Gastrocnemius medialis (tissue), 4 donors: ENCODE measurements at regions of chr6 and their contacts with region 1.

Region 1: DNA sequence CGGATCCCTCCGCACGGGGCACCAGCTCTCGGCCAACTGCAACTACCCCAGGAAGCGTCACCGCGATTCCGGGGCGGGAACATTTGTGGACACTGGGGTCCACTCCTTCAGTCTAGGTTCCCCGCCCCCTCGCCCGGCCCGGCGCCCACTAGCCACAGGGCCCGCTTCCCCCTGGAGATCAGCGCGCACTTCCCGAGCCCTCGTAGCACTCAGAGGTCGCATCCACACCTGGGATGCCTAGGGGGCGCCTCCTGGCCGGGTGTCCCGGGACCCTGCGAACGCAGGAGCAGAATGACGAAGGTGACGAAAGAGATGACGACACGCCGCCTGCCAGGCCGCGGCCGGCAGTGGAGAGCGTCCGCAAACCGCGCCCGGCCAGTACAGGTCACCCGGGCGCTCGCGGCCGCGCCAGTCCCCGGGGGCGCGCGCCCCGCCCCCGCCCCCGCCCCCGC is 309 bp upstream of the AIG1 start:
- DNase-seq: peak; percentile 65 to 84
- ATAC-seq: peak; percentile 57 to 69
- H3K4me3 ChIP-seq: peak overlapping the region; percentile 81 to 97 (median 89)
- H3K27ac ChIP-seq: peak overlapping the region; percentile 96 to 100 (median 98)
- H3K4me1 ChIP-seq: peaks cover 28 to 36% of the 10 kb centered on the region in 2 donors
- H3K27me3 ChIP-seq: no peaks in the 10 kb centered on the region
- CTCF ChIP-seq: peak in 1 of 5 experiments; percentile 22
- POLR2A ChIP-seq: peak; percentile 65 to 76

Region 2: GRCh38 chr6:141541581-141542324 is 1518.6 kb before region 1 on chr6:
- in situ Hi-C with region 1: no loop called
- intact Hi-C with region 1: no loop called
- DNase-seq: no peak
- ATAC-seq: no peak
- H3K4me3 ChIP-seq: no peak overlapping the region
- H3K27ac ChIP-seq: no peak overlapping the region
- H3K4me1 ChIP-seq: no peaks in the 10 kb centered on the region
- H3K27me3 ChIP-seq: no peaks in the 10 kb centered on the region
- CTCF ChIP-seq: no peak
- POLR2A ChIP-seq: no peak

Region 3: GRCh38 chr6:142531727-142532126 is 528.7 kb before region 1 on chr6:
- in situ Hi-C with region 1: no loop called
- intact Hi-C with region 1: no loop called
- DNase-seq: no peak
- ATAC-seq: no peak
- H3K4me3 ChIP-seq: no peak overlapping the region
- H3K27ac ChIP-seq: no peak overlapping the region
- H3K4me1 ChIP-seq: no peaks in the 10 kb centered on the region
- H3K27me3 ChIP-seq: no peaks in the 10 kb centered on the region
- CTCF ChIP-seq: no peak
- POLR2A ChIP-seq: no peak

Region 4: DNA sequence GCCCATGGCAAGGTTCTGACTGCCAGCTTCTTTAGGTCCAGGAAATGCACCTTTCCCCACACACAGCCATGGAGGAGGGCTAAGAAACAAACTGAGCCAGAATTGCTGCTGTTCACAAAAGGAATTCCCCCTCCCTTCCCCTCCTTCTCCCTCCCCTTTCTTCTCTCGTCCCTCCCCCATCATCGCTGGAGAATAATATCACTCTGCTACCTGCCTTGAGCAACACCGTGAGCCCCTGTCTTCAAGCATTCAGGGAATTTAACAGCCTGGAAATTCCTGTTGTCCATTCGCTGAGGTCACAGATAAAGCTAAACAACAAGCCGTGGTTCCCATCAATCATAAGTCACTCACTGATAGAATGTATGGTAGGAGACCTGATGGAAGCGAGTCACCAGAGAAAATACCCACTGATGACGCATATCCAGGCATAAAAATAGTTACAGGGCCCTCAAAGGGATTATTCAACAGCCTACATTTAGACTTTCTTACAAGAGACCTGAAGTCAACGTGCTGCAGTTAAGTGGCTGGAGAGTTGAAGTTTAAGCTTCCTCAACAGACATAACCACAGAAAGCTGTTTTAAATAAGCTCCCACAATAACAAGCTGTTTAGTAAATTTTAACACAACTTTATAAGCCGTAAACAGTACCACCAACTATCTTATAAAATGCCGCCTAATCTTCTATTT is 175.1 kb before region 1 on chr6:
- in situ Hi-C with region 1: no loop called
- intact Hi-C with region 1: loop called (anchors 2 kb)
- DNase-seq: peak; percentile 48 to 53
- ATAC-seq: peak; percentile 94 to 97
- H3K4me3 ChIP-seq: peak overlapping the region; percentile 38 to 54 (median 47)
- H3K27ac ChIP-seq: peak overlapping the region; percentile 81 to 93 (median 84)
- H3K4me1 ChIP-seq: peaks cover 61 to 71% of the 10 kb centered on the region in 2 donors
- H3K27me3 ChIP-seq: no peaks in the 10 kb centered on the region
- CTCF ChIP-seq: no peak
- POLR2A ChIP-seq: peak; percentile 55 to 80

Region 5: DNA sequence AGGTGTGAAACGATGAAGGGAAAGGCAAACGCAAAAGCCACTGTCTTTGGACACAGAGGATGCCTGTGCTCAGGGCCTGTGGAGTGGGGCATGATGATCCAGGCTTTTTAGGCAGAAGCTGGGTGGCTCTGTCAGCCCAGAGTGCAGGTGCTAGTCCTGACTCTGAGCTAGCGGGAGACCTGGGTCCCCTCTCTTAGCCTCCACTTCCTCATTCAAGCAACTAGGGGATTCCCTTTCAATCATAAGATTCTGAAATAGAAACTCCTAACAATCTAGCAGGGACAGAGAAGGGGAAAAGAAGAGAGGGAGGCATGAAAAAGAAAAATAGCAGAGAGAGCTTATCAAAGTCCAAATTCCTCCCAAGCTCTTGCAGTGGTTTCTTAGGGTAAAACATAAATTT is 107.8 kb before region 1 on chr6:
- in situ Hi-C with region 1: loop called in 2 of 4 experiments (anchors 5 to 10 kb)
- intact Hi-C with region 1: no loop called
- DNase-seq: no peak
- ATAC-seq: no peak
- H3K4me3 ChIP-seq: no peak overlapping the region
- H3K27ac ChIP-seq: no peak overlapping the region
- H3K4me1 ChIP-seq: peaks cover 4 to 5% of the 10 kb centered on the region in 2 donors
- H3K27me3 ChIP-seq: no peaks in the 10 kb centered on the region
- CTCF ChIP-seq: no peak
- POLR2A ChIP-seq: no peak

Region 6: DNA sequence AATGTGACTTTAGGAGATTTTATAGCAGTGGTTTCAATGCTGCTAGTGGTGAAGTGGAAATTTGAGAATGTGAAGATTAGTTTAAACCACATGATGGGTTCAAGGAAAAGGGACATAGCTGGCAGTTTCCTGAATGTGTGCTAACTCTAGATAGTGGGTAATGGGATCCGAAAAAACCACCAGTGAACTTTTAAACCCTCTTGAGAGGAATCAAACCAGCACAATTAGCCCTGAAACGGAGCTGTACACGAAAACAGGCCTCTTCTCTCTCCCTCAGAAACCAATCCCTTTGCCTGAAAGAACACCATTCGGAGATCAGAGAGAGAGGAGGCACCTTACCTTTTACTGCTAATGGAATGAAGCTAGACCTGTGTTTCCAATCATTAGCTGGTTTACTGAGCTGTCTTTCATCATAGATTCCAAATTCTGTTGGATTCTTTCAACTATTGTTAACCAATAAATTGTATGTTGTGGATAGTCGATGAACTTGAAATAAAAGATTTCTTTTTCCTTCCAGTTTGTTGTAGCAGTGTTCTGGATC is 104.3 kb after region 1 on chr6:
- in situ Hi-C with region 1: no loop called
- intact Hi-C with region 1: loop called (anchors 10 kb)
- DNase-seq: no peak
- ATAC-seq: no peak
- H3K4me3 ChIP-seq: no peak overlapping the region
- H3K27ac ChIP-seq: no peak overlapping the region
- H3K4me1 ChIP-seq: peaks cover 13 to 15% of the 10 kb centered on the region in 2 donors
- H3K27me3 ChIP-seq: no peaks in the 10 kb centered on the region
- CTCF ChIP-seq: no peak
- POLR2A ChIP-seq: no peak

Region 7: DNA sequence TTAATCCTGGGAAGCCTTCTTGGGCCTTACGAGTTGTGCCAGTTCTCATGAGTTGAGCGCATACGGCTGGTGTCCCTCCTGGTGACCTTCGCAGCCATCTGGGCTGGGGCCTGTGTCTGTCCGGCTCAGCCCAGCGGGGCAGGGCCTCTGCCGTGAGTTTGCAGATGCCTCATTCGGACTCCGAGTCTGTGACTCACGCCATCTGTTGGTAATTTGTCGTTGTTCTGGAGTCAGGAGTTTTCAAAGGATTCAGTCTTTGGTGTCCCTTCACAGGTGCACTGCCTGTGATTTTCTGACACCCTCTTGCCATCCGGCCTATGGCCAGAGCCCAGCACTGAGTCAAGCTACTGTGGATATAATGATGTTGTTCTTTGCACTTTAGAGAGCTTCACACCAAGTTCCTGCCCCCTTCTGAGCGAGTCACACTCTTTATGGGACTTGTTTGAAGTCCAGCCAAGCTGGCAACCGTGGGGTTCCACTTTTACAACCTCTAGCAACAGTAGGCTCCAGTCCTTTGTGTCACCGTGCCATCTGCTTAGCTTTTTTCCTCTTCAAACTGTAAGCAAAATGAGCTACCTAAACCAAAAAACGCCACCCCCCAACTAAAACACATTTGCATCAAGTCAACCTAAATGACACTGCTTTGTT is 175.9 kb after region 1 on chr6:
- in situ Hi-C with region 1: no loop called
- intact Hi-C with region 1: loop called (anchors 5 kb)
- DNase-seq: peak; percentile 52 to 78
- ATAC-seq: peak; percentile 96 to 97
- H3K4me3 ChIP-seq: no peak overlapping the region
- H3K27ac ChIP-seq: peak overlapping the region; percentile 49 to 75 (median 66)
- H3K4me1 ChIP-seq: peaks cover 4 to 19% of the 10 kb centered on the region in 2 donors
- H3K27me3 ChIP-seq: no peaks in the 10 kb centered on the region
- CTCF ChIP-seq: no peak
- POLR2A ChIP-seq: no peak

Region 8: GRCh38 chr6:143450453-143451371 is 390.3 kb after region 1 on chr6 and contains the starts of genes ADAT2 and PEX3:
- in situ Hi-C with region 1: no loop called
- intact Hi-C with region 1: loop called (anchors 2 kb)
- DNase-seq: peak; percentile 88 to 92
- ATAC-seq: peak; percentile 96
- H3K4me3 ChIP-seq: peak within 1 kb of the TSS; percentile 62 to 87 (median 74)
- H3K27ac ChIP-seq: peak within 1 kb of the TSS; percentile 78 to 87 (median 84)
- H3K4me1 ChIP-seq: peaks cover 18 to 23% of the 10 kb centered on the region in 2 donors
- H3K27me3 ChIP-seq: no peaks in the 10 kb centered on the region
- CTCF ChIP-seq: no peak
- POLR2A ChIP-seq: peak; percentile 50 to 77
- total RNA-seq, gene ADAT2: 0.16 to 4.4 (median 0.94) TPM
- total RNA-seq, gene PEX3: 9.8 to 18.2 (median 12.3) TPM